ENCODE measurements at regions of chr11 and their contacts with region 1.

Region 1: GRCh38 chr11:35165423-35166368 is 26.7 kb downstream of the CD44 start:
- DNase-seq: peak; percentile 67 to 99 (median 94)
- ATAC-seq: peak; percentile 62 to 78
- H3K4me3 Mint-ChIP-seq: peak overlapping the region; percentile 61 to 91 (median 82)
- H3K27ac Mint-ChIP-seq: peak overlapping the region; percentile 89 to 100 (median 100)
- H3K4me1 Mint-ChIP-seq: peaks cover 58 to 100% (median 100%) of the 10 kb centered on the region in 4 donors
- H3K27me3 Mint-ChIP-seq: peaks cover 0 to 2% (median 0%) of the 10 kb centered on the region in 5 donors

Region 2: GRCh38 chr11:35118906-35119305 is 46.8 kb before region 1 on chr11:
- POLR2A ChIA-PET with region 1: no interaction called
- DNase-seq: no peak
- ATAC-seq: no peak
- H3K4me3 Mint-ChIP-seq: no peak overlapping the region
- H3K27ac Mint-ChIP-seq: peak overlapping the region in 1 of 10 donors; percentile 49
- H3K4me1 Mint-ChIP-seq: peaks cover 11 to 62% (median 34%) of the 10 kb centered on the region in 4 donors
- H3K27me3 Mint-ChIP-seq: no peaks in the 10 kb centered on the region

Region 3: DNA sequence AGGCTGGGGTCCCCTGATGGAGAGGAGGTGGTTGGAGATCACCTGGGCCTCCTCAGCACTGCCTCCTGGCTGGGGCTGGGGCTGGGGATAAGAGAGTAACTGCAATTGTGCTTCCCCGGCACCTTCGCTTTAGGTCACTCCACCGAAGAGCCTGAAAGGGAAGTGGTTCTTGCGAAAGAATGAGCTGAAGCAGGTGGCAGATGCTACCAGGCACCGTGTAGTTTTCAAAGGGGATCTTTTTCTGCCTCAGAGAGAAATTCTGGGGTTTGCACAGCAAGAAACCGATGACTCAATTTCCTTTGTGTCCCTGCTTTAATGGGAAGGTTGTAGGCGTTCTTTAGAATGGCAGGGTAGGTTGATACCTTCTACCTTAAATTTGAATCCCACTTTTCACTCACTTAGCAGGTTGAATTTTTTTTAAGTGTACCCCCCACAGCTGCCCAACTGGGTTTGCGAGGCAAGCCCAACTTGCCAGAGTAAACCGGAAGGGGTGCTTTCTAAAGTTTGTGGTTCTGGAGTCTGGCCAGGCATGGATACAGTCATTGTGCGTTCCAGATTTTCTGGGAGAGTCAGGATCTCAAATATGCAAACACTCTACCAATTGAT is 21.5 kb before region 1 on chr11:
- POLR2A ChIA-PET with region 1: interaction called, 163 read pairs
- DNase-seq: peak; percentile 20 to 82 (median 64)
- ATAC-seq: peak; percentile 41 to 61
- H3K4me3 Mint-ChIP-seq: peak overlapping the region; percentile 86 to 100 (median 97)
- H3K27ac Mint-ChIP-seq: peak overlapping the region; percentile 91 to 98 (median 94)
- H3K4me1 Mint-ChIP-seq: peaks cover 52 to 90% (median 81%) of the 10 kb centered on the region in 4 donors
- H3K27me3 Mint-ChIP-seq: no peaks in the 10 kb centered on the region

Region 4: GRCh38 chr11:35151241-35151640 is 14.5 kb before region 1 on chr11:
- POLR2A ChIA-PET with region 1: interaction called, 13 read pairs
- DNase-seq: no peak
- ATAC-seq: no peak
- H3K4me3 Mint-ChIP-seq: peak overlapping the region in 9 of 10 donors; percentile 36 to 74 (median 61)
- H3K27ac Mint-ChIP-seq: peak overlapping the region; percentile 83 to 95 (median 92)
- H3K4me1 Mint-ChIP-seq: peaks cover 68 to 100% (median 100%) of the 10 kb centered on the region in 4 donors
- H3K27me3 Mint-ChIP-seq: no peaks in the 10 kb centered on the region

Region 5: DNA sequence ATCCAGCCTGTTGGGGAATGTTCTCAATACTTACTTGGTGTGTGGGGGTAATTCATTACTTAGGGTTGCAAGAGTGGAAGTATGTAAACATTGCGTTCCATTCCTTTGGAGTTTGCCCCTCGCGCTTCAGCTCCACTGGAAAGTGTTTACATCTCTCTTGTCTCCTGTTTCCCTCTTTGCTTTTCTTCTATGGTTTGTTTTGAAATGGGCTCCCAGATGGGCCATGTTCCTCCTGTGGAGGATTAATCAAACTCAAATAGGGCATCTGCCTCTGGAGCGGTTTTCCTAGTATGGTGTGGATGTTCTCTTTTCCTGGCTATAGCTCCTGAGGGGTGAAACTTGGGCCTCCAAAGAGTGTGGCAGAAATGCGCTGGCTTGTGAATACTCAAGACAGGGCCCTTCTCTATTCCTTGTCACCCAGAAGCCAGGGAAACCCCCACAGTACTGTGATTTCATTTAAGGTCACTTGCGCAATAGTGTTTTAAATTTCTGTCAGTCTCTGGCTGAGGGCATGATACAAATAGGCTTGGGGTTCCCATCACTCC is 25.2 kb after region 1 on chr11:
- POLR2A ChIA-PET with region 1: no interaction called
- DNase-seq: no peak
- ATAC-seq: no peak
- H3K4me3 Mint-ChIP-seq: peak overlapping the region in 3 of 10 donors; percentile 2 to 20 (median 6)
- H3K27ac Mint-ChIP-seq: peak overlapping the region; percentile 15 to 83 (median 69)
- H3K4me1 Mint-ChIP-seq: peaks cover 36 to 95% (median 82%) of the 10 kb centered on the region in 4 donors
- H3K27me3 Mint-ChIP-seq: no peaks in the 10 kb centered on the region

Region 6: DNA sequence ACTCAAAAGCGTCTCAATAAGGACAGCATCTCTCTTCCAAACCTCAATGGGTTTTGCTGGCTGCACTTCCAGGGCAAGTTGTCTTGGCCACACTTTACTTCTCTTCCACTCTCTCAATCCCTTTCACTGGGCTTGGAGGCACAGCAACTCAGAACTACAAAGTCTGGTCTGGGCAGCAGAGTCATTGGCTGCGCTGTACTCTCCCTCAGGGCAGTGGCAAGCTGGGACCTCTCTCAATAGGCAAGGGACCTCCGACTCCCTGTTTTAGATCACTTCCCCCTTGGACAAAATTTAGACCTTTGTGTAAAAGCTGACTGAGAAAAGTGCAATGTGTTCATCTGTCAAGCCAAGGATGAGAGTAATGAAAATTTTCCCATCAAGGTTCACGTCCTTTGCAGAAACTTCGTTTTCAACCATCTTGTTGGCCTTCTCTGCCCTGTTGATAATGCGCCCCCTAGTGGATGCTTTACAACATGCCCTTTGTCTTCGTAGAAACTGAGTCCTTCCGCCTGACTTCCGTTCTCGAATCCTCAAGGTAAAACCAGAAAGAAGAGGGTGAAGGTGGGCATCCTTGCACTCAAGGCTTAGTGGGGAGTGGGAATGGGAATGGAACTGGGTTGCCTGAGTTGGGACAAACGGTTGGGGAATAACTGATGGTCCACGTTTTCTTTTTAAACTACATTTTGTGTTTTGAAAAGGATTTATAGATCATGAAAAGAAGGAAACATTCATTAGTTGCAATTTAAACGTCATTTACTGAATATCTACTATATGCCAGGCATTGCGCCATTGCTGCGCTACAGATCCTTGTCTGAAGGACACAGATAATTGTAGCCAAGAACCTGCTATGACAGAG is 72.4 kb after region 1 on chr11:
- POLR2A ChIA-PET with region 1: interaction called, 21 read pairs
- DNase-seq: peak in 8 of 10 donors; percentile 36 to 80 (median 50)
- ATAC-seq: no peak
- H3K4me3 Mint-ChIP-seq: peak overlapping the region in 4 of 10 donors; percentile 5 to 76 (median 42)
- H3K27ac Mint-ChIP-seq: peak overlapping the region in 9 of 10 donors; percentile 28 to 92 (median 86)
- H3K4me1 Mint-ChIP-seq: peaks cover 55 to 85% (median 79%) of the 10 kb centered on the region in 4 donors
- H3K27me3 Mint-ChIP-seq: no peaks in the 10 kb centered on the region

Region 7: DNA sequence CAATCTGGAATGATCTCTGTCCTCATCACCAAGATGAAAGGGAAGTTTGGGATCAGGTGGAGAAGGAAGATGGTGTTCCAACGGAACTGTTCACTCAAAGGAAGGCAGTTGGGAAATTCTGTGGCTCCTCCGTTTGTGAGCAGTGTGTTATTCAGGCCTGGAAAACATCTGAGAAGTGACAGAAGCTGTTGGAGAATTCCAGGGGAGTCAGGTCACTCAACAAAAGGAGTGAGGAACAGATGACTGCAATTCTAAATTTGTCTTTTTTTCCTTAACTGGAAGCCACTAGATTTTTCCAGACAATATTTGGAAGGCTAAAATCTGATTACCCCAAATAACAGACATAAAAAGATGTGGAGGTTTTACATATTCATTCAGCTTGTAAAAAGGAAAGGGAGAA is 81.0 kb after region 1 on chr11:
- POLR2A ChIA-PET with region 1: interaction called, 21 read pairs
- DNase-seq: no peak
- ATAC-seq: no peak
- H3K4me3 Mint-ChIP-seq: peak overlapping the region in 8 of 10 donors; percentile 22 to 75 (median 61)
- H3K27ac Mint-ChIP-seq: peak overlapping the region; percentile 91 to 100 (median 98)
- H3K4me1 Mint-ChIP-seq: peaks cover 27 to 79% (median 74%) of the 10 kb centered on the region in 4 donors
- H3K27me3 Mint-ChIP-seq: no peaks in the 10 kb centered on the region

Region 8: DNA sequence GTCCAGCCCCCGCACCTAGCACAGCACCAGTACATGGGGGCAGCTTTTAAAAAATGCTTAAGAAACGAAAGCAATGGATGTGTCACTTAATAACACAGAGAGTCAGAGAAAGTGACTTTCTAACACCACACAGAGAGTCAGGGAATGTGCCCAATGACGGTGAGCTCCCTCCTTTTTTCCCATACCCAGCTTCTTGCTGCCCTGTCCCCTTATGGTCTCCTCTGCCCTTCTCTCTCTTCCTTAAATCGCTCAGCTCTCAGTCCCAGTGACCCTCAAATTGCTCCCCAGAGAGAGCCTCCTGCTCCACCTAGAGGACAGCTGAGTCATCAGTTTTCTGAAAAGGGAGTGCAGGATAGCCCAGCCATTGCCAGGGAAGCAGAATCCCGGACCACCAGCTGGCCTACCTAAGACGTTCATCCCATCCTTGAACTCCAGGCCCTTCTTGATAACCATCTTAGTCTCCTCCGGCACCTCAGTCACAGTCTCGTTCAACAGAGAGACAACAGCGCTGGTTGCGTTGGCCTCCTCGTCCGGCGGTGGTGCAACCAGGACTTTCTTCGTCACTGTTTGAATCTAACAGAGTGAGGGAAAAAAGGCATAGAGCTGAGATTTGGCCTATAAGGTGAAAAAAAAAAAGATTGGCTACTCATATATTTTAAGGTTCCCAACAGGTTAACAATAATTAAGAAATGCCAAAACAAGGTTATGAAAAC is 140.1 kb after region 1 on chr11:
- POLR2A ChIA-PET with region 1: interaction called, 12 read pairs
- DNase-seq: peak; percentile 9 to 80 (median 50)
- ATAC-seq: peak; percentile 83 to 94
- H3K4me3 Mint-ChIP-seq: peak overlapping the region; percentile 61 to 87 (median 80)
- H3K27ac Mint-ChIP-seq: peak overlapping the region; percentile 79 to 95 (median 93)
- H3K4me1 Mint-ChIP-seq: peaks cover 17 to 31% (median 25%) of the 10 kb centered on the region in 4 donors
- H3K27me3 Mint-ChIP-seq: no peaks in the 10 kb centered on the region

Measured in naive thymus-derived CD8-positive, alpha-beta T cell (primary cell).